Naive thymus-derived CD4-positive, alpha-beta T cell (primary cell): ENCODE measurements at regions of chr5 and their contacts with region 1.

Region 1: GRCh38 chr5:39005566-39006232 is 68.5 kb downstream of the RICTOR start:
- DNase-seq: peak in 6 of 9 donors; percentile 13 to 49 (median 34)
- ATAC-seq: peak; percentile 81
- H3K4me3 ChIP-seq: no peak overlapping the region
- H3K4me3 Mint-ChIP-seq: peak overlapping the region in 2 of 10 donors; percentile 10 to 27
- H3K27ac ChIP-seq: no peak overlapping the region
- H3K27ac Mint-ChIP-seq: peak overlapping the region in 8 of 9 donors; percentile 46 to 79 (median 68)
- H3K4me1 ChIP-seq: peaks cover 3 to 4% of the 10 kb centered on the region in 2 donors
- H3K4me1 Mint-ChIP-seq: peaks cover 23 to 71% (median 56%) of the 10 kb centered on the region in 7 donors
- H3K27me3 ChIP-seq: no peaks in the 10 kb centered on the region
- H3K27me3 Mint-ChIP-seq: no peaks in the 10 kb centered on the region

Region 2: GRCh38 chr5:39080597-39081204 is 75.0 kb after region 1 on chr5:
- CTCF ChIA-PET with region 1: interaction called, 5 read pairs
- POLR2A ChIA-PET with region 1: no interaction called
- intact Hi-C with region 1: loop called (anchors 1 to 2 kb)
- DNase-seq: peak in 1 of 9 donors; percentile 28
- ATAC-seq: peak; percentile 81
- H3K4me3 ChIP-seq: no peak overlapping the region
- H3K4me3 Mint-ChIP-seq: no peak overlapping the region
- H3K27ac ChIP-seq: no peak overlapping the region
- H3K27ac Mint-ChIP-seq: no peak overlapping the region
- H3K4me1 ChIP-seq: peaks cover 0 to 5% of the 10 kb centered on the region in 2 donors
- H3K4me1 Mint-ChIP-seq: peaks cover 6 to 19% (median 17%) of the 10 kb centered on the region in 7 donors
- H3K27me3 ChIP-seq: peaks cover 14 to 17% of the 10 kb centered on the region in 2 donors
- H3K27me3 Mint-ChIP-seq: peaks cover 8 to 59% (median 29%) of the 10 kb centered on the region in 5 donors

Region 3: GRCh38 chr5:39106322-39106721 is 100.6 kb after region 1 on chr5:
- CTCF ChIA-PET with region 1: interaction called, 3 read pairs
- POLR2A ChIA-PET with region 1: no interaction called
- intact Hi-C with region 1: loop called in 1 of 2 experiments (anchors 2 kb)
- DNase-seq: peak in 3 of 9 donors; percentile 5 to 29 (median 22)
- ATAC-seq: no peak
- H3K4me3 ChIP-seq: no peak overlapping the region
- H3K4me3 Mint-ChIP-seq: no peak overlapping the region
- H3K27ac ChIP-seq: peak overlapping the region; percentile 23
- H3K27ac Mint-ChIP-seq: peak overlapping the region in 7 of 9 donors; percentile 9 to 67 (median 51)
- H3K4me1 ChIP-seq: peaks cover 0 to under 1% of the 10 kb centered on the region in 2 donors
- H3K4me1 Mint-ChIP-seq: peaks cover 4 to 52% (median 28%) of the 10 kb centered on the region in 7 donors
- H3K27me3 ChIP-seq: no peaks in the 10 kb centered on the region
- H3K27me3 Mint-ChIP-seq: no peaks in the 10 kb centered on the region

Region 4: DNA sequence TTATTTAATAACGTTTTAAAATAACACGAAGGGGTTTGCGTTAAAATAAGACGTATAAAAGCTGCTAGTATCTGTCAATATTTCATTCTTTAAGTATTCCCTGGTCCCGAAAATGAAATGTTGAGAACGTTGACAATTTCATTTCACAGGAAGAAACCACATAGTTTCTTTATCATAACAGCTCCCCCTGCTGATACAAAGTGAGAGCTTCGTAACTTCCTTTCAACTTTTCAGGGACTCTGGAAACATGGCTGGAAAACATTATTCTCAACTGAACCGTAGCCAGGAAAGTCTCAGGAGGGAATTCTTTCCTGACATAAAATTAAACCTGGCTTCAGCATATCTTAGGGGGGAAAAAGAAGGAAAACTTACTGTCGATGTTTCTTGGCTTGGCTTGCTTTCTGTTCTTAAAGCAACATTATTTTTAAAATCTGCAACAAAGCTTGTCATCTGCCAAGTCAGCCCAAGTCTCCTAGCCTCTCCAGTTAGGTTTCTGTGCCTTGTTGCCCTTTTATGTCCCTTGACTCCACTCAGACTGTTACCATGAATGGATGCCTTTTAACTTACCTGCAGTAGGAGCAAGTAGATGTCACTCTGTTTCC is 542.0 kb after region 1 on chr5:
- CTCF ChIA-PET with region 1: interaction called, 5 read pairs
- POLR2A ChIA-PET with region 1: no interaction called
- intact Hi-C with region 1: loop called in 1 of 2 experiments (anchors 1 kb)
- DNase-seq: peak in 7 of 9 donors; percentile 14 to 49 (median 36)
- ATAC-seq: peak; percentile 50
- H3K4me3 ChIP-seq: no peak overlapping the region
- H3K4me3 Mint-ChIP-seq: peak overlapping the region in 8 of 10 donors; percentile 16 to 67 (median 50)
- H3K27ac ChIP-seq: no peak overlapping the region
- H3K27ac Mint-ChIP-seq: peak overlapping the region in 1 of 9 donors; percentile 55
- H3K4me1 ChIP-seq: no peaks in the 10 kb centered on the region
- H3K4me1 Mint-ChIP-seq: peaks cover 0 to 8% (median 5%) of the 10 kb centered on the region in 7 donors
- H3K27me3 ChIP-seq: no peaks in the 10 kb centered on the region
- H3K27me3 Mint-ChIP-seq: peaks cover 0 to 5% (median 0%) of the 10 kb centered on the region in 5 donors